KBM-7 (cell line): ENCODE measurements at regions of chr13 and their contacts with region 1.

Region 1: DNA sequence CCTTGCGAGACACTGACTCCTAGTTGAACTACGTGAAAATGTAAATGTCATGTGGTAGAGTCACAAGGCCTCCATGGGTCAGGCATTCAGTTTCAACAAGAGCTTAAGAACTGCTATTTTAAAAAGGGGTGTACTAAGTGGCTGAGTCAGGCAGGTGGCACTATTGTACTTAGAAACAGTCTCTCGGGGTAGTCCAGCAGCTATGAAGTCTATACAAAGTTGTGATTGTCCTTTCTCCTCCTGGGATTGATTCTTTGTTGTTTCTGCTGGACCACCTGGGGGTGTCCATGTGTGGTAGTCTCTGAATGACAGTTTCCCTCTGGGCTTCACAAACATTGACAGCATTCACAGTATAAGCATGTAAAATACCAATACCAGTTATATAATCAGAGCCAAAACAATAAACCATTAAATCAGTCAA is 33.0 kb downstream of the UGGT2 start:
- DNase-seq: peak; percentile 69

Region 2: GRCh38 chr13:96822895-96823294 is 802.7 kb after region 1 on chr13:
- in situ Hi-C with region 1: loop called (anchors 25 kb)
- DNase-seq: peak; percentile 7